Heart left ventricle (tissue), 16 donors: ENCODE measurements at regions of chr13 and their contacts with region 1.

Region 1: GRCh38 chr13:94182185-94182761 is 297.2 kb downstream of the DCT start:
- DNase-seq: no peak
- ATAC-seq: no peak
- H3K4me3 ChIP-seq: no peak overlapping the region
- H3K27ac ChIP-seq: no peak overlapping the region
- H3K4me1 ChIP-seq: peaks cover 0 to 7% (median 0%) of the 10 kb centered on the region in 12 donors
- H3K27me3 ChIP-seq: no peaks in the 10 kb centered on the region
- CTCF ChIP-seq: no peak
- POLR2A ChIP-seq: no peak

Region 2: GRCh38 chr13:94351292-94351990 is 169.2 kb after region 1 on chr13:
- intact Hi-C with region 1: loop called in 1 of 10 experiments (anchors 10 kb)
- DNase-seq: no peak
- ATAC-seq: no peak
- H3K4me3 ChIP-seq: no peak overlapping the region
- H3K27ac ChIP-seq: no peak overlapping the region
- H3K4me1 ChIP-seq: no peaks in the 10 kb centered on the region
- H3K27me3 ChIP-seq: no peaks in the 10 kb centered on the region
- CTCF ChIP-seq: no peak
- POLR2A ChIP-seq: no peak